ENCODE measurements at regions of chr13 and their contacts with region 1.

Region 1: GRCh38 chr13:51557875-51558612 is 26.2 kb upstream of the WDFY2 start:
- DNase-seq: no peak
- H3K4me3 Mint-ChIP-seq: peak overlapping the region; percentile 22
- H3K27ac Mint-ChIP-seq: peak overlapping the region; percentile 72
- H3K4me1 Mint-ChIP-seq: peaks cover 18% of the 10 kb centered on the region
- H3K27me3 Mint-ChIP-seq: no peaks in the 10 kb centered on the region
- CTCF ChIP-seq: no peak

Region 2: GRCh38 chr13:51542346-51543242 is 15.4 kb before region 1 on chr13:
- CTCF ChIA-PET with region 1: interaction called, 10 read pairs
- intact Hi-C with region 1: no loop called
- DNase-seq: no peak
- H3K4me3 Mint-ChIP-seq: peak overlapping the region; percentile 47
- H3K27ac Mint-ChIP-seq: no peak overlapping the region
- H3K4me1 Mint-ChIP-seq: peaks cover 26% of the 10 kb centered on the region
- H3K27me3 Mint-ChIP-seq: no peaks in the 10 kb centered on the region
- CTCF ChIP-seq: no peak